ENCODE measurements at regions of chr18 and their contacts with region 1.

Region 1: DNA sequence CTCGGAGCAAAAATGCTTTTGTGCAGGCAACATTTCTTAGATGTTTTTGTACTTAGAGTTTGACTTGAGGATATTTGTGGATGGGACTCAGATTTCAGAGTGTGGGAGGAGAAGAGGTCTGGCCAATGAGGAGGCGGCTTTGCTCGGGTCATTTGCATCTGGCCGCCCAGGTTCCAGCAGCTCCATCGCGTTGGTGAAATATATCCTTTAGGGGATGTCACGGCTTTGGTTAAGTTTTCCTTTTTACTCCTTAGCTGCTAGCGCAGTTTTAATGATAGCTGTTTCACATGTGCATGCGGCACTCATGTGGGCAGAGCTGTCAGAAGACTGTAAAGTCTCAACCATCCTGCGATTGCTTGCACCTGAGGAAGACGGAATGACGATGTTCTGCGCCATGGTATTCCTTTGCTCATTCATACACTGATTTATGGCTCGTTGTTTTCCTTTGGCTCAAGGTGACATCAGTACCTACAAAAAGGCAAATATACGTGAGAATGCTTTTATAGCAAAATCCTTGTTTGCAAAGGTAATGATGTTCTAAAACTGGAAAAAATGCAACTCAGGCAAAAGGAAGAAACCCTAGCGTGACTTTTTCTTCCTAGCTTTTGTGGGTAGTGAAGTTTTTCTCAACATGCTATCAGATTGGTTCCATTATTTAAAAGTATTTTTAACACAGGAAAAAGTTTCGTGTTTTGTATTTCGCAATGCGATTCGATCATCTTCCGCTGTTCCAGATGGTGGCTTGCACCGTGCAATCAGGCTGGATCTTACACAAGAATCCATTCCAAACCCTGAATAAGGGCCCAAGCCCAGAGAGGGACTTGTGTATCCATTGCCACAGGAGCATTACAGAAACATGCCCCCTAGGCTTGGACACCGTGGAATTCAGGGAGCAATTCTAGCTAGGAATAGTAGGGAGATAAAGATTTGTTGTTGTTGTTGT is 70.5 kb upstream of the ZNF516 start:
- DNase-seq: peak; percentile 69
- ATAC-seq: peak; percentile 94 to 97

Region 2: DNA sequence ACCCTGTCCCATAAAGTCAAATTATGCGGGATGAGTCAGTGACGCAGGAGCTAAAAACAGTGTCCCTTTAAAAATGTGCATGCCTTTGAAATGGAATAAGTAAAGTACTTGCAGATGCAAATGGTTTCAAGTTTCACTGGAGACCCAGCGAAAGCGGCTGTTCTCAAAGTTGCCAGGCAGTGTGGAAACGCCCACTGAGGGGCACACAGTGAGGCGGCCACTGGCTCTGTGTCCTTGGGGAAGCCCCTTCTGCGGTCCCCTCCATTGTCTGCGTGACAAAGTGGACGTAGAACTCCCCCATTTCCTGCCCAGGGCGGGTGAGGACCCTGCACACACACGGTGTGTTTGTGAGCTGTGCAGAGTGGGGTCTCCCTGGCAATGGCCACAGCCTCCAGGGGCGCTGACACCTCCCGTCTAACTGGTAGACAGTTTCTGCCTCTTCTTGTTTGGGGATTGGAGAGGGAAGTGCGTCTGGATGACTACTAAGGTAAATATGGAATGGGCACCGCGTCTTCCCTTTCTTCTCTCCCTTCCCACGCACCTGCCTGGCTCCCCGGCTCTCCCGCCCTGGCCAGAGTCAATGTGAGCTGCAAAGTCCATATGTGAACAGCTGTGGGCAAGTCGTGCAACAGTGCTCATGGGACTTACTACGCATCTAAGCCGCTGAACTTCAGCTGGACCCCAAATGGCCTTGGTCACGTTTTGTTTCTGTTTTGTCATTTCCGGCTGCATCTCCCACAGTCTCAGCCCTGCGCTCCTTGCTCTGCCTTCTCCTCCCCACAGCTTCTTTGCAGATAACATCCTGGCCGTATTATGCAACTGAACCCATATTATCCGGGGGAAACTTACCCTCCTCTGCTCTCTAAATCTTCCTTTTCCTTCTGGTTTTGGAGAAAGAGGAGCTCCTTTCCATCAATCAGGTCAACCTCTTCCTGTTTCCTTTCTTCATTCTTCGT is 36.8 kb before region 1 on chr18:
- intact Hi-C with region 1: loop called in 1 of 2 experiments (anchors 5 kb)
- DNase-seq: no peak
- ATAC-seq: peak; percentile 53 to 65

Region 3: GRCh38 chr18:76610933-76611749 is 45.6 kb after region 1 on chr18:
- intact Hi-C with region 1: no loop called
- DNase-seq: no peak
- ATAC-seq: peak in 1 of 2 donors; percentile 47

Region 4: DNA sequence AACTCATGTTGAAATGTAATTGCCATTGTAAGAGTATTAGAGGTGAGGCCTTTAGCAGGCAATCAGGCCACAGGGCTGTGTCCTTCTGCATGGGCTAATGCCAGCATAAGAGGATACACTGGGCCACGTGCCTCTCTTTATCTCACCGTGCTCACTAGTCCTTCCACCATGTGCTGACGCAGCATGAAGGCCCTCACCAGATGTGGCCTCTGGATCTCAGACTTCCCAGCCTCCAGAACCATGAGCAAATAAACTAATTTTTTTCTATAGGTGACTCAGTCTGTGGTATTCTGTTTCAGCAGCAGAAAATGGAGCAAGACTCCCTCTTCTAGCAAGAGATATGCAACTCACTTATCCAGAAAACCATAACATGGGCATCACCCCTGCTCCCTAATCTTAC is 107.1 kb after region 1 on chr18:
- intact Hi-C with region 1: no loop called
- DNase-seq: no peak
- ATAC-seq: no peak

Region 5: DNA sequence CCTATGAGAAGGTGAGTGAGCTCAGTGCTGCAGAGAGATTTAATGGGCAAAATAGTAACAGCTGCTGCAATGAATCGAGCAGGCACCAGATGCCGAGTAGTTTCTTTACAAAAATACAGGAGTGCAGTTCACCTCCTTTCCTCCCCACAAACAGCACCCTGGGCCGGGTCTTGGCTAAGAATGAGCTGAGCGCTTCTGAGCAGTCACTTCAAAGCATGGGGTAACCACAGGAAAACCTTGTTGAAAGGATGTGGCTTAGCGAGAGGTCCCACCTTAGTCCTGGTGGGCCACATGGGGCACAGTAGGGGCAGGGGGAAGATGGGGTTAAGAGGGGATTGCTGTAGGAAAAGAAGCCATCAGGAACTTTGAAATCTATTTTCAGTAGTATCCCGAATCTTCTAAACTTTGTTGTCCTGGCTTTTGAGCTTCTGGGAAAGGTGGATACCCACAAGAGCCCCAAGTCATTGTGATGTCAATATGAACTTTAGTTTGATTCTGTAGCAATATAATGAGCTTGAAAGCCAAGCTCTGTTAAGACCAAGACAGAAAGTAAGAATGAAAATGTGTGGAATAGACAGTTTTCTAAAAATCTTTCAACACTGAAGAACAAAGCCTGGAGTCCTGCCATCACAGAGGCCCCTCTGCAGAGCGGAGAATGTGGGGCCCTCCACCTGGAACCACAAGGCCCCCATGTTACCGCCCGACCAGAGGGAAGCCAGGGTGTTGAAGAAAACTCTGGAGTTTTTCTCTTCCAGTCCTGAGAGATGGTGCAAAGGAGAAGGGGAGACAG is 155.9 kb after region 1 on chr18:
- intact Hi-C with region 1: no loop called
- DNase-seq: no peak
- ATAC-seq: peak in 1 of 2 donors; percentile 55

Measured in left cardiac atrium (tissue), 4 donors.